ENCODE measurements at regions of chr12 and their contacts with region 1.

Region 1: GRCh38 chr12:65823513-65824375 is 539 bp upstream of the HMGA2 start:
- DNase-seq: no peak
- H3K4me3 Mint-ChIP-seq: peak overlapping the region; percentile 73
- H3K27ac Mint-ChIP-seq: no peak overlapping the region
- H3K4me1 Mint-ChIP-seq: peaks cover 20% of the 10 kb centered on the region
- H3K27me3 Mint-ChIP-seq: peaks cover 65% of the 10 kb centered on the region

Region 2: DNA sequence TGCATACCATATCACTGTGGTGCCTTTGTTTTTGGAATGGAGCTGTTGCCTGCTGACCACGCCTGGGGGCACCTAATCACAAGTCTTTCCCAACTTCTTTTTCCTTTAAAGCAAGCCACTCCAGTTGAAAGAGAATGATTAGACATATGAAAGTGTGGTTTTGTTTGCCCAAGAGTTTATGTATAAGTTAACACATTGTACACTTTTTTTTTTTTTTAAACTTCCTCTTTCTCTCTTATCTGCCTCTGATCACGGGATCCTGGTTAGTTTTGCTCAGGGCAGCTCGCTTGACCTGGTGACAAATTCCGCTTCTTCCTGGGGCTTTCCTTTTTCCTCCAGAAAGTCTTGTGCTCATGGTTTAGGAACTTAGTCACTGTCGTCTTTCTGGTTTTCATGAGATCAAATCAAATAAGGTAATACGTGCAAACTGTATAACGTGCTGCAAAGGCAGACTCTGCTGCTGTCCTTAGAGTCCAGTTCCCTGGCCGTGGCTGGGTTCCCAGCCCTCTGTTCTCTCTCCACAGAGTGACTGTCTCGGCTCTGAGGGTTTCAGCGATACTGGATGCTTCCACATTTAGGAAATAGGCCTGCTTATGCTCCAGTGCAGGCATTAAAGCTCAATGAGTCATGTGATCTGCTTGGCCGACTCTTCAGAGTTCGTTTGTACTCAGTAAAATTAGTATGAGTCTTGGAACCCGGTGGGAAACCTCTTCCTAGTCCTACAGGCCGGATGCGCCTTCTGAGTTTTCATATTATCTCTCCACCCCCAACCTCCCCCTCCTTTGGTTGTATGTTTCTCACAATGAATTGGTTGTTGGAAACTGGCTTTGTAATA is 1198.3 kb before region 1 on chr12:
- intact Hi-C with region 1: no loop called
- DNase-seq: no peak
- H3K4me3 Mint-ChIP-seq: peak overlapping the region; percentile 73
- H3K27ac Mint-ChIP-seq: peak overlapping the region; percentile 83
- H3K4me1 Mint-ChIP-seq: peaks cover 25% of the 10 kb centered on the region
- H3K27me3 Mint-ChIP-seq: no peaks in the 10 kb centered on the region

Region 3: GRCh38 chr12:64826234-64826633 is 997.5 kb before region 1 on chr12:
- intact Hi-C with region 1: loop called (anchors 10 kb)
- DNase-seq: peak; percentile 24
- H3K4me3 Mint-ChIP-seq: peak overlapping the region; percentile 46
- H3K27ac Mint-ChIP-seq: no peak overlapping the region
- H3K4me1 Mint-ChIP-seq: peaks cover 8% of the 10 kb centered on the region
- H3K27me3 Mint-ChIP-seq: peaks cover 58% of the 10 kb centered on the region

Region 4: GRCh38 chr12:65728848-65729793 is 94.6 kb before region 1 on chr12:
- intact Hi-C with region 1: loop called (anchors 2 kb)
- DNase-seq: no peak
- H3K4me3 Mint-ChIP-seq: no peak overlapping the region
- H3K27ac Mint-ChIP-seq: no peak overlapping the region
- H3K4me1 Mint-ChIP-seq: peaks cover 4% of the 10 kb centered on the region
- H3K27me3 Mint-ChIP-seq: peaks cover 55% of the 10 kb centered on the region

Region 5: DNA sequence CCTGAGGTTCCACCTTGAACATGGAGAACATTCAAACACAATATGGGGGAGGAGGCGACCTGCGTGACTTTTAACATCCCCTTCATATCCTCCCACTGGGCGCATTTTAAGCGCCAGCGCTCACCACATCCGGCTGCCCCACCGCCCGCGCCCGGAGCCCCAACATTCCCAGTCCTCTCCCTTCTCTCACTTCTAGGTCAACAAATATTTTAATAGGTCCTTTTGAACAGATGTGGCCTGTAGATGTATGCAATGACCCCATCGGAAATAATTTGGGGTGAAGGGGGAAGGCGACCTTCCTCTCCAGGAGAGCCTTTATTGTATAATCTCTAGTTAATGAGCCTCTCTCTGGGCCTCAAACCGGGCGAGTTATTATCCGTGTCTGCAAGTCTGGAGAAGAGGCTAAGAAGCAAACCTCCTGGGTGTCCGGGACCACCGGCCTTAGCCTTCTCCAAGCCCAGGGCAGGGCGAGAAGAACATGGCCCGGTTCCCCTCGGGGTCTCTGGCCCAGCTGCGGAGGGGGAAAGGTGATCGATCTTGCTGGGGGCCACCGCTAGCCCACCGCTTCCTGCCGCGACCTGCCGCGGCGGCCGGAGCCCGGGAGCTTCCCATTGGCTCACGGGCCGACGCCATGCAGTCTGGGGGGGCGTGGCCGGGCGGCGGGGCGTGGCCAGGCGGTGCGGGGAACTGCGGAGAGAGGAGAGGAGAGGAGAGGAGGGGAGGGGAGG is 82.7 kb before region 1 on chr12:
- intact Hi-C with region 1: loop called (anchors 5 kb)
- DNase-seq: peak; percentile 70
- H3K4me3 Mint-ChIP-seq: peak overlapping the region; percentile 72
- H3K27ac Mint-ChIP-seq: peak overlapping the region; percentile 1
- H3K4me1 Mint-ChIP-seq: peaks cover 13% of the 10 kb centered on the region
- H3K27me3 Mint-ChIP-seq: peaks cover 36% of the 10 kb centered on the region

Region 6: DNA sequence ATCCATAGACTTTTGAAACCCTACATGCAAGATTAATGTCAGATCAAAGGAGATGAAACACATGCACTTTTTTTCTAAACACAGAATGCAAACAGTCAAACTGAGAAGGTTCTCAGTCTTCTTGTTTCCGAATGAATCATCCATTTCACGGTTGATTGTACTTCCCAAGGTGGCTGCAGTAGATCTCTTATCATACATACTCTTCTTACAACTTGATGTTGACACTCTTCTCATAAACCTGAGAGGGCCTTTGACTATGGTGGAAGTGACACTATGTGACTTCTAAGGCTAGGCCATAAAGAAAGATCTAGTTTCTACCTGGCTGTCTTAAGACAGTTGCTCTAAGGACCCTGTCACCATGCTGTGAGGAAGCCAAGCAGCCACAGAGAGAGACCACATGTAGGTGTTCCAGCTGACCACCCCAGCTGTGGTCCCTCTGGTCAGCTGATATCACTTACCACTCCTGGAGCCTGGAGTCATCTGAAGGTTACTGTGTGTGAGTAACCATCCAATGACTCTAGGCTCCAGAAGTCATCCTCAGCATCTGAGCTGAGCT is 66.7 kb before region 1 on chr12:
- intact Hi-C with region 1: loop called (anchors 2 kb)
- DNase-seq: no peak
- H3K4me3 Mint-ChIP-seq: no peak overlapping the region
- H3K27ac Mint-ChIP-seq: peak overlapping the region; percentile 73
- H3K4me1 Mint-ChIP-seq: peaks cover 22% of the 10 kb centered on the region
- H3K27me3 Mint-ChIP-seq: peaks cover 49% of the 10 kb centered on the region